Activated B cell treated with CpG ODN at 0.5 μM for 24 hours (primary cell): ENCODE measurements at regions of chr10 and their contacts with region 1.

Region 1: DNA sequence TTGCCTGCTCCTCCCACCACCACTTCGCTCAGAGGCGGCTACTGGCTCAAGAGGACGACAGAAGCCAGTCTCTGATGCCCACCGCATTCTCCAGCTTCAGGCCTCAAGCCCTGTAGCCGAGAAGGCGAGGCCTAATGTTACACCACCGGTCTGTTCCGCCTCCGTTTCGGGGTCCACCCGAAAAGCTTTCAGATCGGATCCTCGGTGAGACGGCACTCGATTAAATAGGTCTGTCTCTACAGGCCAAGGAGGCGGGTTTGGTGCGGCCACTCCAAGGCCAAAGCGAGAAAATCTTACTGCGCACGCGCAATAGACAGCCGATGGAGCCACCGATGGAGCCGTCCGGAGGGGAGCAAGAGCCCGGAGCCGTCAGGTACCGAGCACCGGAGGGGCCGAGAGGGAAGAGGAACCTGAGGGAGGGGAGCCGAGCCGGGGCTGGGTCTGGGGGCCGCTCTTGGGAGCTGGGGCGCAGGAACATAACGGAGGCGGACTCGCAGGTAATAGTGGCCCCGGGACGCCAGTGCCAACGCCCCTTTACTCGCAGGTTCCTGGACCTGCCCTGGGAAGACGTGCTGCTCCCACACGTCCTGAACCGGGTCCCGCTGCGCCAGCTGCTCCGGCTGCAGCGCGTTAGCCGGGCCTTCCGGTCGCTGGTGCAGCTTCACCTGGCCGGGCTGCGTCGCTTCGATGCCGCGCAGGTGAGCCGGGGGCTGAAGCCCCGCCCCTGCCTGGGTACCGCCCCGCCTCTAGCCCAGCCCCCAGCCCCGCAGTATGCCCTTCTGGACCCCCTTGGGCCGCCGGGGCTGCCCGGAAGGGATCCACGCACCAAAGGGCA is at the start of gene FBXL15:
- DNase-seq: peak; percentile 93
- ATAC-seq: peak; percentile 78
- H3K4me3 Mint-ChIP-seq: peak within 1 kb of the TSS; percentile 98
- H3K27ac Mint-ChIP-seq: peak within 1 kb of the TSS; percentile 95
- H3K4me1 Mint-ChIP-seq: peaks cover 45% of the 10 kb centered on the region
- H3K27me3 Mint-ChIP-seq: peaks cover 17% of the 10 kb centered on the region
- CTCF ChIP-seq: no peak
- total RNA-seq, gene FBXL15: 15.7 and 18.9 TPM in 2 replicates

Region 2: DNA sequence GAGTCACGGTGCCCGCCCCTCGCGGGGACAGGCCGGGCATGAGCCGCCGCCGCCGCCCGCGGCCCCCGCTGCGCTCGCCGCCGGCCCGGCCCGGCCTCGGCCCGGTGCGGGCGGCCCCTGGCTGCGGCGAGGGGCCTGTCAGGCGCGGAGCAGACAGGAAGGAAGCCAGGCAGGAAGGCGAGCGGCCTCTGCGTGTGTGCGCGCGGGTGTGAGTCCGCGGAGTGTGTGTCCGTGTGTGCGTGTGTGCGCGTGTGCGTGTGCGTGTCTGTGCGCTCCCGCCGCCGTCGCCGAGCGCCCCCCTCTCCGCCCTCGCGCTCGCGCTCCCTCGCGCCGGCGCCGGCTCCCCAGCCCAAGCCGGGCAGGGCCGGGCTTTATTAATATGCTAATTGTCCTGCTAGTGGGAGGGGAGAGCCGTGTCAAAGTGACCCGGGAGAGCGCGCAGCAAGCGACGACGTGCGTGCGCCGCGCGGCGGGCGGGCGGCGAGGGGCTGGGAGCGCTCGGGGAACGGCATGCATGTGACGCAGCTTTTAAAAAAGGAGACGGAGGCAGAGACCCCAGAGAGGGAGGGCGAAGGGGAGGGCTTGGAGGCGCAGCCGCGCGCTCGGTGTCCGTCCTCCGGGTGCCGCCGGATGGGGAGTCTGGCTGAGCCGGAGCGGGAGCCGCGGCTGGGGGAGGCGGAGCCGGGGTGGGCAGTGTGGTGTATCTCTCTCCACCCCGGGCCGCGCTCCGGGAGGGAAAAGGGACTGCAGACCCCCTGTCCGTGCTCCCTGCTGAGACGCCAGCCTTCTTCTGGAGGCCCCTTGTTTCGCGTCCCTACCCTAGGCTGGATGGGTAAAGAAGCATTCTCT is 300.7 kb before region 1 on chr10 and contains the start of gene LDB1:
- CTCF ChIA-PET with region 1: no interaction called
- POLR2A ChIA-PET with region 1: no interaction called
- intact Hi-C with region 1: loop called (anchors 2 kb)
- DNase-seq: peak; percentile 73
- ATAC-seq: peak; percentile 67
- H3K4me3 Mint-ChIP-seq: peak within 1 kb of the TSS; percentile 94
- H3K27ac Mint-ChIP-seq: peak within 1 kb of the TSS; percentile 94
- H3K4me1 Mint-ChIP-seq: peaks cover 55% of the 10 kb centered on the region
- H3K27me3 Mint-ChIP-seq: no peaks in the 10 kb centered on the region
- CTCF ChIP-seq: no peak
- total RNA-seq, gene LDB1: 54.0 and 61.9 TPM in 2 replicates

Region 3: DNA sequence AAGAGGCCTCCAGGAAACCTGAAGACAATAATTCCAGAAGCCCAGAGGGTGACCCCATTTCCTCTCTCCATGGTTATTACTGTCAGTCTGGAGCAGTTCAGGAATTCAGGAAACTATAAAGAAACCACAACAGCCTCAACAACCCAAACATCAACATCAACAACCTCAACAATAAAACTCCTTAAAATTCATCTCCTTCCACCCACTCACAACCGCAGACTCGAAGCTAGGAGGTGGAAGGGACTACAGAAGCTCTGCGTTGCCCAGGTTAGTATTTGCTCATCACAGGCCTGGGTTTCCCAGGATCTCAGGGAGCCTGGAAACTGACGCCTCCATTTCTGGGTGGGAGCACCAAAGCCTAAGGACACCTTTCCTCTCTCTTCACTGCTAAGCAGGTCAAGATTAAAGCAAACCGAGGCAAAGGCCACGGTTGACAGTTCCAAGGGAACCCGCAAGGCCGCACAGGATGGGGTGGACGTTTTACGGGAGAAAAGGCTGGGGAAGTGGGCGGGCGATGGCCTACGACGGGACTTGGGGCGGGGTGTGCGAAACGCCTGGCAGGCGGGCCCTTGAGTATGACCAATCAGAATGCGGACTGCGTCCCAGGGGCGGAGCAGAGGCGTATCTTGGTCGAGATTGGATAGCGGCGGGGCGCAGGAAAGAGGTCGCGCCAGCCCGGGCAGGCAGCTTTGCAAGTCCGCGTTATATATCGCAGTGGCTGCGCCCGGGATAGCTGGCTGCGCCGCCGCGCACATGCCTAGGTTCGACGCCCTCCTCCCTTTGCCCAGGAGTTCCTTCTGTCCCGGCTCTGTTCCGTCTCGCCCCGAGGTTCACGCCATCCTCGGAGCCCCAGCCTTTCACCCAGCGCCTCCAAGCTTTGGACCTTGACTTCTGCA is 195.1 kb before region 1 on chr10 and contains the start of gene ELOVL3:
- CTCF ChIA-PET with region 1: interaction called, 40 read pairs
- POLR2A ChIA-PET with region 1: interaction called, 10 read pairs
- intact Hi-C with region 1: loop called (anchors 1 kb)
- DNase-seq: peak; percentile 69
- ATAC-seq: peak; percentile 94
- H3K4me3 Mint-ChIP-seq: peak within 1 kb of the TSS; percentile 71
- H3K27ac Mint-ChIP-seq: no peak within 1 kb of the TSS
- H3K4me1 Mint-ChIP-seq: peaks cover 19% of the 10 kb centered on the region
- H3K27me3 Mint-ChIP-seq: peaks cover 59% of the 10 kb centered on the region
- CTCF ChIP-seq: no peak
- total RNA-seq, gene ELOVL3: not detected in 2 replicates

Region 4: DNA sequence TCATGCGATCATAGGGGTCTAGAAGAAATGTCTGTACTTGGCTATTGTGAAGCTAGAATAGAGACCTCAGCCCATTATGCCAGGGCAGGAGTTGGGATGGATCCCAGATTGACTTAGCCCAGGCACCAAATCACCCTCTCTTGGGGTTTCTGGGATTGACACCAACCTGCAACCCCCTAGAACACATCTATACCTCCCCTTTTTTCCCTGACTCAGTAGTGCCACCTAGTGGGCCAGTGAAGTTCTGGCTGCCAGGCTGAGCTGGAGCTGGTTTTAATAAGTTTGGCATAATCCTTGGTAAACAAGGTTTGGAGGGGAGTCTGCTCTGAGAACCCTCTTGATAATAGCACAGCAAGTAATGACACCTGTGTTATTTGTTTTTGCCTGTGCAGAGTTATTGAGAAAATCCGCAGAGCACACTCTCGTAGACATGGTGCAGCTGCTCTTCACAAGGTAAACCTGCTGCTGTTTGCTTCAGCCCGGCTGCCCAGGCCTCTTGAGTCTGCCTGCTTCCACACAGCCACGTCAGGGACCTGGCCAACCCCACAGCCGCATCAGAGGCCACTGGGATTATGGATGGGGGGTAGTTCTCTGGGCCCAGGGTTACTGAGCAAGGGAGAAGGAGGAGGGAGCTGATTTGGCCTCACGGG is 68.8 kb before region 1 on chr10:
- CTCF ChIA-PET with region 1: interaction called, 3 read pairs
- POLR2A ChIA-PET with region 1: no interaction called
- intact Hi-C with region 1: loop called (anchors 2 kb)
- DNase-seq: peak; percentile 45
- ATAC-seq: peak; percentile 70
- H3K4me3 Mint-ChIP-seq: no peak overlapping the region
- H3K27ac Mint-ChIP-seq: no peak overlapping the region
- H3K4me1 Mint-ChIP-seq: no peaks in the 10 kb centered on the region
- H3K27me3 Mint-ChIP-seq: no peaks in the 10 kb centered on the region
- CTCF ChIP-seq: peak; percentile 81

Region 5: GRCh38 chr10:102399217-102400089 is 21.6 kb before region 1 on chr10:
- CTCF ChIA-PET with region 1: interaction called, 29 read pairs
- POLR2A ChIA-PET with region 1: interaction called, 305 read pairs
- intact Hi-C with region 1: loop called (anchors 1 kb)
- DNase-seq: peak; percentile 87
- ATAC-seq: peak; percentile 37
- H3K4me3 Mint-ChIP-seq: peak overlapping the region; percentile 94
- H3K27ac Mint-ChIP-seq: peak overlapping the region; percentile 97
- H3K4me1 Mint-ChIP-seq: peaks cover 54% of the 10 kb centered on the region
- H3K27me3 Mint-ChIP-seq: no peaks in the 10 kb centered on the region
- CTCF ChIP-seq: peak; percentile 95

Region 6: DNA sequence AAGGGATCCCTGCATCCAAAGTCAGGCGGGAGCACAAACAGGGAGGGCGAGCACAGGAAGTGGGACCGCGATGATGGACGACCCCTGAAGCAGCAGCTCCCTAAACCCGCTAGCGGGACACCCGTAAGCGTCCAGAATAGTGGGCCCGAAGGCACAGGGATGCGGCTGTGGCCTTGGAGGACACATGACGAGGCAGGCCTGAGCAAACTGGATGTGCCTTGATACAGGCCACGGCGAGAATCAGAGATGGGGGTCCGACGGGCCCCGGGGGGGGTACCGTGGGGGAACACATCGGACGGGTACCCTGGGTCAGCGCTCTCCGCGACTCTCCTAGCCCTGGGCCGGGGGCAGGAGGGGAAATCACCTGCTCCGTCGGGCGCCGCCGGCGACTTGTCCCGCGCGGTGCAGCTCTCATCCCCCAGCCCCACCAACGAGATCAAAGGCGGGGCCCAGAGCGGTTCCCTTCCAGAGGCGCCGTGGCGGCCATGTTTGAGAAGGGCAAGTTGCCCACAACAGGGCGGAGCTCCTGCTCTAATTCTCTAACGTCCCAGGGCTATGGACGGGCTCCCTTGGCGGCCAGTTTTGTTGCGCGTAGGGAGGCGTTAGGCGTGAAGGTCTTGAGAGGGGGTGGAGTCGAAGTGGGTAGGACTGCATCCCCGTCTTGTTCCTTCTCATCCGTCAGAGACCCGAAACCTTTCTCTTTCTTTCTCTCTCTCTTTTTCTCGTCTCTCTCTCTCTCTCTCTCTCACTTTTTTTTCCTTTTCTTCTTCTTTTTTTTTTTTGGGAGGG is 11.3 kb after region 1 on chr10 and contains the start of gene CUEDC2:
- CTCF ChIA-PET with region 1: interaction called, 14 read pairs
- POLR2A ChIA-PET with region 1: interaction called, 78 read pairs
- intact Hi-C with region 1: loop called (anchors 1 kb)
- DNase-seq: peak; percentile 96
- ATAC-seq: peak; percentile 98
- H3K4me3 Mint-ChIP-seq: peak within 1 kb of the TSS; percentile 93
- H3K27ac Mint-ChIP-seq: peak within 1 kb of the TSS; percentile 75
- H3K4me1 Mint-ChIP-seq: peaks cover 45% of the 10 kb centered on the region
- H3K27me3 Mint-ChIP-seq: no peaks in the 10 kb centered on the region
- CTCF ChIP-seq: no peak
- total RNA-seq, gene CUEDC2: 43.7 and 46.0 TPM in 2 replicates

Region 7: DNA sequence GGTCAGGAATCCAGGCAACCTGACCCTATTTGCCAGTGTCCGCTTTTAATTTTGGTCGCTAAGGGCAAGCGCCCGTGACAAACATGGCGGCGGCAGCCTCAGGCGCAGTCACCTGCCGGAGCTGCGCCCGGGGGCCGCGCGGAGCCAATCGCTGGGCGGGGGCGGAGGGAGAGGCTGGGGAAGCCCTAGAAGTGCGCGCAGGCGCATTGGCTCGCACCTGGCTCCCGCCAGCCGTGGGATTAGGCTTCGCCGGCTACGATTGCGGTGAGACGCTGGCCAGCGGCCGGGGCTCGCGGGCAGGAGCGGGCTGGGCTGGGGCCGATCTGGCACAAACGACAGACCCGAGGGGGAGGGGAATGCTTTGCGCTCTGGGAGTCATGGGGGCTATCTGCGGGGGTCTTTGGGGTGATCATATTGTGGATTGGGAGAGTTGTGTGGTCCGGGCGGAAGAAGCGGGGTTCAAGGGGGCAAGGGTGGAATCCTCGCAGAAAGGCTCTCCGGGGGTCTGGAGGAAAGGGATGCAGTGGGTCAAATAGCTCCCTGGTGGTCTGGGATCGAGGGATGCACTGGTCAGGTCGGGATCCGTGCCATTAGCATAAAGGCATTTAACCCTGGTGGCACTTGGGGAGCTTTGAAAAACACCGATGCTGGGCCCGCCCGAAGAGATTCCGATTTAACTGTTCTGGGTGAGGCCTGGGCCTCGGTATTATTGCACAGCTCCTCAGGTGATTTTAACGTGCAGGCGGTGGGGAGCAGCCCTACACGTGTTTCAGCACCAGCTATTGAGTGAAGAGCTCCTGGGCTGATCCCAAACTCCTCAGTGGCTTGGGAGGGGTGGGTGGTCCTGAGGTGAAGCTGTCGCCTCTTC is 40.4 kb after region 1 on chr10:
- CTCF ChIA-PET with region 1: interaction called, 8 read pairs
- POLR2A ChIA-PET with region 1: interaction called, 15 read pairs
- intact Hi-C with region 1: loop called (anchors 1 kb)
- DNase-seq: peak; percentile 90
- ATAC-seq: peak; percentile 99
- H3K4me3 Mint-ChIP-seq: peak overlapping the region; percentile 88
- H3K27ac Mint-ChIP-seq: peak overlapping the region; percentile 85
- H3K4me1 Mint-ChIP-seq: peaks cover 31% of the 10 kb centered on the region
- H3K27me3 Mint-ChIP-seq: no peaks in the 10 kb centered on the region
- CTCF ChIP-seq: no peak